Adrenal gland (tissue), 19 donors: ENCODE measurements at regions of chr3 and their contacts with region 1.

Region 1: DNA sequence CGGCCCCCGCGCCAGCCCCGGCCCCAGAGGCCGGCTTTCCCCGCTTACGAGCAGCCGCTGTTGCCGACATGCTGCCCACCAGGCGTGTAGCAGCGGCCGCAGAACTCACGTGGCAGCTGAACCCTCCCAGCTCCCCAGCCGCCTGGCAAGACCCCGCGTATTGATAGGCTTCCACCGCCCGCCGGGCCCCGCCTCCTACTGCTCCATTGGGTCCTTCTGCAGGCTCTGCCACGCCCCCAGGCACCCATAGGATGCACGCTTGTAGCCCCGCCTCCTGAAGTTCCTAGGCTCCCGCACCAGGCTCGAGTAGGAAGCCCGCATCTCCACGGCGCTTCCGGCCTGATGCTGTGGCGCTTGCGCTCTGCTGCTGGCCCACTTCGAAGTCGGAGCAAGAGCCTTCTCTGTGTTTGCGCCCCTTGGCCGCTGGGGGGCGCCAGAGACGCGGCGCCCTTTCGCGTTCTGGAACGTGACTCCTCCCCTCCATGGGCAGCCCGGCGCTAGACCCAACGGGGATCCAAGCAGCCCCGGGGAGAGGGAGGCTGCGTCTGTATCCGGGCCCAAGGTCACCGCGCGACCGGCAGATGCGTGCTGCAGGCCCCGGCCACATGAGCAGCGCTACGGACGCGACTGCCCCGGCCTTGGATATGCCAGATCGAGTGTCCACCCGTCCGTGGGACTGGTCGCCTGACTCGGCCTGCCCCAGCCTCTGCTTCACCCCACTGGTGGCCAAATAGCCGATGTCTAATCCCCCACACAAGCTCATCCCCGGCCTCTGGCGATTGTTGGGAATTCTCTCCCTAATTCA is at the starts of genes PARP3 and RRP9:
- DNase-seq: peak; percentile 99 to 100 (median 100)
- H3K4me3 ChIP-seq: peak within 1 kb of the TSS; percentile 13 to 87 (median 56)
- H3K27ac ChIP-seq: peak within 1 kb of the TSS; percentile 97 to 99 (median 98)
- H3K4me1 ChIP-seq: peaks cover 31 to 37% of the 10 kb centered on the region in 2 donors
- H3K27me3 ChIP-seq: no peaks in the 10 kb centered on the region
- CTCF ChIP-seq: peak; percentile 99 to 100 (median 100)
- POLR2A ChIP-seq: peak; percentile 51 to 77
- total RNA-seq, gene PARP3: 7.8 to 94.1 (median 72.4) TPM
- total RNA-seq, gene RRP9: 13.4 to 39.8 (median 19.3) TPM

Region 2: DNA sequence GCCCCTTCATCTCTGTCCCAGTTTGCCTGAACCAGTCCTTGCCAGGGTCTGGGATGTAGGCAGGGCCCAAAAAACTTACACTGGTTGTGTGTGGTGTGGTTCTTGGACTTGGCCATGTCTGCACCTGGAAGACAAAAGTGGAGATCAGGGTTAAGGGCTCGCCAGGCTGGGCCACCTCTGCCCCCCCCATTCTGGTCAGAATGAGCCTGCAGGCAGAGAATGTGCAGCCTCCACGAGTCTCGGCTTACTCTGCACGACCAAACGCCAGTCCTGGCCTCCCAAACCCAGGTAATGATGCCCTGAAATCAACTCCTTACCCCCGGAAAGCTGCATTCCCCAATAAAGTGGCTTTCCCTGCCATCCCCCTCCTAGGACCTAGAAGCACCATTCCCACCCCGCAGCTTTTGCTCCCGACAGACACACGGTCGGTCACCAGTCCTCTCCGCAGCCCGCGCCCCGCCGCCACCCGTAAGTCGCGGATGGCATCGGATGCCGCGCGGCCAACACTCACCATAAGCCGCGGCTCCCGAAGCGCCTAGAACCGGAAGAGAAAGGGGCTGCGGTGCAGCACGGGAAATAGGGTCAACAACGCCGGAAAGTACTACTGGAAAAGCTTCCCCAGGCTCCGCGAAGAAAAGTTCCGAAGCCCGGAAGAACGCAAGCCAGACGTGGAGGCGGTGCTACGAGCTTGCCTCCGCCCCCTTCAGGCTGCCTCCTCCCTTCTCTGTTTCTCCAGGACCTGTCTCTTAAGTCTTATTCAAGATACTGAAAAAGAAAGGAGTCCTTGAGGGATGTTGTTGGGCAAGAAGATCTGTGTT is 53.6 kb after region 1 on chr3 and contains the start of gene RPL29:
- intact Hi-C with region 1: loop called in 1 of 2 experiments (anchors 10 kb)
- DNase-seq: peak; percentile 92 to 97 (median 94)
- H3K4me3 ChIP-seq: peak within 1 kb of the TSS; percentile 19 to 71 (median 58)
- H3K27ac ChIP-seq: peak within 1 kb of the TSS; percentile 67 to 92 (median 83)
- H3K4me1 ChIP-seq: peaks cover 12 to 22% of the 10 kb centered on the region in 2 donors
- H3K27me3 ChIP-seq: no peaks in the 10 kb centered on the region
- CTCF ChIP-seq: peak; percentile 12 to 39 (median 36)
- POLR2A ChIP-seq: peak; percentile 49 to 64
- total RNA-seq, gene RPL29: 1,018 to 1,982 (median 1,344) TPM